BJ (cell line): ENCODE measurements at regions of chr11 and their contacts with region 1.

Region 1: GRCh38 chr11:77047007-77047927 is 13.1 kb downstream of the B3GNT6 start:
- DNase-seq: peak; percentile 92
- H3K4me3 ChIP-seq: peak overlapping the region; percentile 44
- H3K27me3 ChIP-seq: peaks cover 2% of the 10 kb centered on the region; the same call in 1 of the 2 replicates
- CTCF ChIP-seq: peak; percentile 65

Region 2: GRCh38 chr11:76997512-76997911 is 49.8 kb before region 1 on chr11:
- CTCF ChIA-PET with region 1: no interaction called
- POLR2A ChIA-PET with region 1: interaction called, 11 read pairs
- DNase-seq: no peak
- H3K4me3 ChIP-seq: no peak overlapping the region
- H3K27me3 ChIP-seq: no peaks in the 10 kb centered on the region
- CTCF ChIP-seq: no peak

Region 3: DNA sequence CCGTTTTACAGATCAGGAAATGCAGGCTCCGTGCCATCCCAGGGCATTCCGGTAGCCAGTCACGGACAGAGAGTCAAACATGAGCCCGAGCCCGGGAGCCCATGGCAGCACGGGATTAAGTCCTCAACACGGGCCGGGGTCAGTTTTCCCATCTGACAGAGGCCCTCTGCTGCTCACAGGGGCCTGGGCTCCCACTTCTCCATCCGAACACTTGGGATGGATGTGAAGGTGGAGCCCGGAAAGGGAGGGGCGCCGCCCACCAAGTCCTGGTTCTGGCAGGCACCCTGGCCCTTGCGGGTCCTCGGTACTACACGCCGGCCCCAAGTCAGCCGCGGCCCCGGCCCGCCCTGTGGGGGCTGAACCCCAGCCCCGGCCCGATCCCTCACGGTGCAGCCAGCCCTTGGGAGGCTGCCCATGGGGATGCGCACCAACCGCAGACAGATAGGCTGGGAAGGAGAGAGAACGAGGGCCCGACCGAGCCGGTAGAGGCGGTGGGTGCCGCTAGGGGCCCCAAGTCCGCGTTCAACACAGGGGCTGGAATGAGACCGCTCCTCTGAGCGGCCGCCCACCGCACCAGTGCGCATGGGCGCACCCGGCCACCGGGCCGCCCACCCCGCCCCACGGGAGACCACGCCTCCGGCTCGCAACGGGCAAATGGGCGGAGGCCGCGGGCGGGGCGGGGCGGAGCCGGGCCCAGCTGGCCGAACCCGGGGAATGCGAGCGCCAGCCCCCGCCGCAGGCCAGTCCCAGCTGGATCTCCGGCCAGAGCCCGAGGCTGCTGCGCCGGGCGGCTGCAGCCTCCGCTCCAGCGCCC is 19.2 kb after region 1 on chr11 and contains the start of gene CAPN5:
- CTCF ChIA-PET with region 1: interaction called, 24 read pairs
- POLR2A ChIA-PET with region 1: no interaction called
- DNase-seq: peak; percentile 57
- H3K4me3 ChIP-seq: peak within 1 kb of the TSS; percentile 75
- H3K27me3 ChIP-seq: no peaks in the 10 kb centered on the region
- CTCF ChIP-seq: peak; percentile 53
- polyA plus RNA-seq, gene CAPN5: 11.3 and 18.4 TPM in 2 replicates

Region 4: DNA sequence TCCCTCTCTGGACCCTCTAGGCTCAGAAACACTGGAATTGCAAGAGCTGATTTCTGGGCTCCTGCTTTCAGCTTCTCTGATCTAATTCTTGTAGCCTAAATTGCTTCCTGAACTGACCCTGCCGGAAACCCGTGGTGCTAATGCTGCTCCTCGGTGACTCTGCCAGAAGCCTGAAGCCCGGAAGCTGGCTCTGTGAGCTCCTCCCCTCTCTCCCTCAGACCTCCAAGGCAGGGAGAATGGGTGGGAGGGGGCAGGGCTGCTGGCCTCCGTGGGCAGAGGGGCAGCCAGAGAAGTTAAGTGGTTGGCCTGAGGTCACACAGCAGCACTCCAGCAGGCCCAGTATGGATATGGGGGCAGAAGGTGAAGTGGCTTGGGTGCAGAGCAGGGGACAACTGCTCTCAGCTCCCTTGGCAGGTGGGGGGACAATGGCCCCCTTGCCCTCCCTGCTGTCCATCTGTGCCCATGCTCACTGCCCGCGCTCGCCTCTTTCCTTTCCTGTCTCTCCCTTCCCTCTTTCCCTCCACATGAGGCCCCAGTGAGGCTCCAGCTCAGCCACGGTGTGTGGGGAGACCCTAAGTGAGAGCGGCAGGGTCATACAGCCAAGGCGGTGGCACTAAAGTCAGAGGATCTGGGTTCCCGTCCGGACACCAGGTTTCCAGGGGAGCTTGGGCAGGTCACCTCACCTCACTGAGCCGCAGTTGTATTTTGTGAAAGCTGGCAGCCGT is 35.7 kb after region 1 on chr11:
- CTCF ChIA-PET with region 1: interaction called, 17 read pairs
- POLR2A ChIA-PET with region 1: no interaction called
- DNase-seq: no peak
- H3K4me3 ChIP-seq: no peak overlapping the region
- H3K27me3 ChIP-seq: no peaks in the 10 kb centered on the region
- CTCF ChIP-seq: no peak

Region 5: DNA sequence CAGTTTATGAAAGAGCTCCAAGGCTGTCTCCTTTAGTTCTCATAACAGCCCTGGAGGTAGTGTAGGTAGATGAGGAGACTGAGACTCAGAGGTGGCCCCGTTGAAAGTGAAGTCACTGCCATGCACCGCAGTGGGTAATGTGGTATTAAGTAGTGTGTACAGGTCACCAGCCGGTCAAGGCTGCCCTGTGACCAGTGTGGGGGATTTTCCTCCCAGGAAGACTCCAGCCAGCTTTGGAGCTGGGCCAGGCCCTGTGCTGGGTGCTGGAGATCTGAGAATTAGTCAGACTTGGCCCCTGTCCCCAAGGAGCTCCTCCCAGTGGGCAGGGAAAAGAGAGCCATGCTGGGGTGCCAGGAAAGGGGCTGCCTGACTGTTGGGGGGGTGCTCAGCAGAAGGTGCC is 60.7 kb after region 1 on chr11:
- CTCF ChIA-PET with region 1: interaction called, 36 read pairs
- POLR2A ChIA-PET with region 1: no interaction called
- DNase-seq: peak; percentile 41
- H3K4me3 ChIP-seq: no peak overlapping the region
- H3K27me3 ChIP-seq: no peaks in the 10 kb centered on the region
- CTCF ChIP-seq: no peak

Region 6: GRCh38 chr11:77187776-77188632 is 140.7 kb after region 1 on chr11:
- CTCF ChIA-PET with region 1: interaction called, 13 read pairs
- POLR2A ChIA-PET with region 1: no interaction called
- DNase-seq: no peak
- H3K4me3 ChIP-seq: no peak overlapping the region
- H3K27me3 ChIP-seq: peaks cover 6% of the 10 kb centered on the region
- CTCF ChIP-seq: peak; percentile 92